Activated CD4-positive, alpha-beta memory T cell treated with anti-CD3 and anti-CD28 coated beads for 36 hours (primary cell): ENCODE measurements at regions of chr6 and their contacts with region 1.

Region 1: DNA sequence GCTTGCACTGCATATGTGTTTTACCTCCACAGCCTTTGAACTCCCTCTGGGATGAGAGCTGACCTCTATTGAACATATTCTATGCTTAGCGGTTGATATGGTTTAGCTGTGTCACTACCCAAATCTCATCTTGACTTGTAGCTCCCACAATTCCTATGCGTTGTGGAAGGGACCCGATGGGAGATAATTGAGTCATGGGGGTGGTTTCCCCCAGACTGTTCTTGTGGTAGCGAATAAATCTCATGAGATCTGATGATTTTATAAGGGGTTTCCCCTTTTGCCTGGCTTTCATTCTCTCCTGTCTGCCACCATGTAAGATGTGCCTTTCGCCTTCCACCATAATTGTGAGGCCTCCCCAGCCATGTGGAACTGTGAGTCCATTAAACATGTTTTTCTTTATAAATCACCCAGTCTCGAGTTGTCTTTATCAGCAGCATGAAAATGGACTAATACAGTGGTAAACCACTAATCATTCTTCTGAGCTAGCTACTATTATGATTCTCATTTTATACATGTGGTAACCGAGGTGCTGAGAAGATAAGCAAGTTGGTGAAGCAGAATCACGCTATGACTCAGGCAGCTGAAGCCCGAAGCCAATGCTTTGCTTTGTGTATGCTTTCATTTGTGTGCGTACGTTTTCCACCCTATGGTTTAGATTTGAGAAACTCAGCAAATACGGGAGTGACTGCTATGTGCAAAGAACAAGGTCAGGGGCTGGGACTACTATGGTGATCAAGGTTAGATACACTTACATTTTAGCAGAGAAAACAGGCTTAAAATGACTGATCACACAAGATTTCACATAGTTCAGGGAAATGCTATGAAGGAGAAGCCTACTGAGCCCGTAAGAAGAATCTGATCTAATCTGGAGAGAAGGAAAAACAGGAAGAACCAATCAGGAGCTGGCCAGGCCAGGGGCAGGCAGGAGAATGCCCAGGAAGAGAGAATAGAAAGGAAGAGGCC is 363.5 kb downstream of the ESR1 start:
- DNase-seq: peak; percentile 86
- H3K4me3 Mint-ChIP-seq: peak overlapping the region; percentile 60
- H3K27ac Mint-ChIP-seq: peak overlapping the region; percentile 96
- H3K4me1 Mint-ChIP-seq: peaks cover 54% of the 10 kb centered on the region
- H3K27me3 Mint-ChIP-seq: no peaks in the 10 kb centered on the region

Region 2: GRCh38 chr6:151390276-151391032 is 780.5 kb before region 1 on chr6:
- CTCF ChIA-PET with region 1: no interaction called
- POLR2A ChIA-PET with region 1: no interaction called
- intact Hi-C with region 1: loop called (anchors 5 kb)
- DNase-seq: peak; percentile 99
- H3K4me3 Mint-ChIP-seq: peak overlapping the region; percentile 98
- H3K27ac Mint-ChIP-seq: peak overlapping the region; percentile 72
- H3K4me1 Mint-ChIP-seq: peaks cover 63% of the 10 kb centered on the region
- H3K27me3 Mint-ChIP-seq: no peaks in the 10 kb centered on the region

Region 3: DNA sequence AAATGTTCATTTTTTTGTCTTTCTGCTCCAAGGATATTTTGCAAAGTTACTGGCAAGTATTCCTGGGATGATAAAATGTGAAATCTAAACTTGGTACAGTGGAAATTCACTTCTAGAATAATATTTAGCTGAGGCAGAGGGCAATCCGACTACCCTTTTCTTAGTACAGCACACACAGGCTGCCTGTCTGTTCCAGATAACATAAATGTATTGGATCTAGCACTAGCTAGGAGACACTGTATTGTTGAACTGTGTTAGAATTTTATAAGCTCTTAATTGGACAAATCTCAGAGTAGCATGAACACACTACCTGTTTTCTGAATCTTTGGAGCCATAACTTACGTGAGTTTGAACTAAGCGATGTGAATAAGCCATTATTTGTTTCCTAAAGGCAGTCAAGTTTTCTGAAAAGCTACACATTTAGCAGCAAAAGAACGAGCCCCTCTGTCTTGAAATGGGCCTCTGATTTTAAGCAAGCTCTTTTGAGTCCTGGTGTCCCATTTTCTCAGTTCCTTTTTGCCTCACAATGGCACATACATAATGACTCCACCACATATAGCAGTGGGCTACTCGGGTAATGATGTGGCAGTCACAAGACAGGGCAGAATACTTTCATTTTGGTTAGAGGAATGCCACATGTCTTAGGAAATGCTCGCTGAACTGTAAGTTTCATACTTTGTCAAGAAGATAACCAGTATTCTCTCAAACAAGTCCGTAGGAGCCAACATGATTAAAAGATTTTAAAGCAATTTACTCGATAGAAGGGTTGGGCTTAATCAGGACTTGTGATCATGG is 480.0 kb before region 1 on chr6:
- CTCF ChIA-PET with region 1: interaction called, 3 read pairs
- POLR2A ChIA-PET with region 1: interaction called, 7 read pairs
- intact Hi-C with region 1: loop called (anchors 1 kb)
- DNase-seq: peak; percentile 63
- H3K4me3 Mint-ChIP-seq: peak overlapping the region; percentile 66
- H3K27ac Mint-ChIP-seq: peak overlapping the region; percentile 47
- H3K4me1 Mint-ChIP-seq: peaks cover 26% of the 10 kb centered on the region
- H3K27me3 Mint-ChIP-seq: peaks cover 5% of the 10 kb centered on the region

Region 4: GRCh38 chr6:151757506-151758245 is 413.3 kb before region 1 on chr6:
- CTCF ChIA-PET with region 1: no interaction called
- POLR2A ChIA-PET with region 1: interaction called, 3 read pairs
- intact Hi-C with region 1: loop called (anchors 1 kb)
- DNase-seq: peak; percentile 55
- H3K4me3 Mint-ChIP-seq: peak overlapping the region; percentile 42
- H3K27ac Mint-ChIP-seq: peak overlapping the region; percentile 61
- H3K4me1 Mint-ChIP-seq: peaks cover 23% of the 10 kb centered on the region
- H3K27me3 Mint-ChIP-seq: no peaks in the 10 kb centered on the region

Region 5: DNA sequence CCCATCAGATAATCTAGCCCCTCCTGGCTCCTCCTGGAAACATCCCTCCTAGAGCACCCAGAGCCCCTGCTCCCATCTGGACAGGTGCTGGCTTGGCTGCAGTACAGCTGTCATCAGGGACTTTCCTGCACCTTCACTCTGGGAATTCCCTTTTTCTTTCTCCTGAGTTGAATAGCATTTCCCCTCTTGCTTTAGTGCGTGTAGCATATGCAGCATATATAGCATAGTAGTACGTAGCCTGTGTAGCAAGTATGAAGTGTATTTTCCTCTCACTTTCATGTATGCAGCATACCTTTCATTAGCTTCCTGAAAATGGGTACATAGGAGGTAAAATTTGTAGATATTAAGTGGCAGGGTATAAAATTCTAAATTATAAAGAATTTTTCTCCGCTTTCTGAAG is 10.6 kb before region 1 on chr6:
- CTCF ChIA-PET with region 1: interaction called, 5 read pairs
- POLR2A ChIA-PET with region 1: interaction called, 13 read pairs
- intact Hi-C with region 1: loop called (anchors 1 kb)
- DNase-seq: peak; percentile 40
- H3K4me3 Mint-ChIP-seq: no peak overlapping the region
- H3K27ac Mint-ChIP-seq: no peak overlapping the region
- H3K4me1 Mint-ChIP-seq: peaks cover 30% of the 10 kb centered on the region
- H3K27me3 Mint-ChIP-seq: no peaks in the 10 kb centered on the region

Region 6: DNA sequence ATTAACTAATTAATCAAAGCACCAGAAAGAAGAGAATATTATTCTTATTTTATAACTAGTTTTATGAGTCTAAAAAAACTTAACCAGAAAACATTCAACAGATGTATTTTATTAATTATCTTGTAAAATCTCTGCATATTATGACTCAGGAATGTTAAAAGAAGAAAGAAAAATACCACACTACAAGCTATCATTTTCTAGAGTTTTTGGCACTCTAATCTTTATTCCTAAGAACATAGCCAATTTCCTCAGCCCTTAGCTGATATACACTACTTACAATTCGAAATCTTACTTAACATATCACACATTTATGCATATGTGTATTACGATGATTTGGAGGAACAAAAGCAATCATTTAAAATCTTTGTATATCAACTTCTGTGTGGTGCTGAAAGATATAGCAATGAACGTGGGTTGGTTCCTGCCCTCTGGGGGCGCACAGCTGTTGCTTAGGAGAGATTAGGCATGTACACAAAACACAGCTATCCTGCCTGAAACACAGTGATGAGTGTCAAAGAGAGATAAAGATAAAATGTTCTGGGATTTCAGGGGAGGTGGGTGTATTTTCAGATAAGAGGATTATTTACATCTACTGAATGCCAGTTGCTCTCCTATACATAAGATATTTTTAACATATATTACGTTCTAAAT is 61.6 kb after region 1 on chr6:
- CTCF ChIA-PET with region 1: interaction called, 3 read pairs
- POLR2A ChIA-PET with region 1: no interaction called
- intact Hi-C with region 1: loop called (anchors 1 kb)
- DNase-seq: peak; percentile 54
- H3K4me3 Mint-ChIP-seq: peak overlapping the region; percentile 67
- H3K27ac Mint-ChIP-seq: peak overlapping the region; percentile 70
- H3K4me1 Mint-ChIP-seq: peaks cover 23% of the 10 kb centered on the region
- H3K27me3 Mint-ChIP-seq: no peaks in the 10 kb centered on the region

Region 7: GRCh38 chr6:152982768-152983636 is 812.0 kb after region 1 on chr6 and contains the start of gene FBXO5:
- CTCF ChIA-PET with region 1: no interaction called
- POLR2A ChIA-PET with region 1: no interaction called
- intact Hi-C with region 1: loop called (anchors 5 kb)
- DNase-seq: peak; percentile 98
- H3K4me3 Mint-ChIP-seq: peak within 1 kb of the TSS; percentile 97
- H3K27ac Mint-ChIP-seq: peak within 1 kb of the TSS; percentile 100
- H3K4me1 Mint-ChIP-seq: peaks cover 38% of the 10 kb centered on the region
- H3K27me3 Mint-ChIP-seq: no peaks in the 10 kb centered on the region
- total RNA-seq, gene FBXO5: 41.8 to 42.7 TPM